Dorsolateral prefrontal cortex (tissue), 120 donors: ENCODE measurements at regions of chr14 and their contacts with region 1.

Region 1: GRCh38 chr14:70188659-70189455 is at the start of gene SLC8A3:
- DNase-seq: peak; percentile 44 to 89 (median 78)
- H3K4me3 ChIP-seq: peak within 1 kb of the TSS; percentile 46 to 81 (median 68)
- H3K27ac ChIP-seq: peak within 1 kb of the TSS in 51 of 59 donors; percentile 11 to 89 (median 70)
- H3K27me3 ChIP-seq: peaks cover 0 to 19% (median 0%) of the 10 kb centered on the region in 45 donors
- CTCF ChIP-seq: peak in 8 of 56 donors; percentile 4 to 20 (median 12)
- total RNA-seq, gene SLC8A3: 8.1 to 33.3 (median 20.7) TPM

Region 2: GRCh38 chr14:68297876-68298469 is 1890.9 kb before region 1 on chr14:
- intact Hi-C with region 1: no loop called
- DNase-seq: no peak
- H3K4me3 ChIP-seq: no peak overlapping the region
- H3K27ac ChIP-seq: peak overlapping the region in 1 of 59 donors; percentile 2
- H3K27me3 ChIP-seq: no peaks in the 10 kb centered on the region
- CTCF ChIP-seq: peak in 7 of 56 donors; percentile 12 to 21 (median 16)

Region 3: GRCh38 chr14:70096866-70097265 is 92.0 kb before region 1 on chr14:
- intact Hi-C with region 1: loop called (anchors 5 kb)
- DNase-seq: peak in 4 of 10 donors; percentile 16 to 59 (median 52)
- H3K4me3 ChIP-seq: no peak overlapping the region
- H3K27ac ChIP-seq: no peak overlapping the region
- H3K27me3 ChIP-seq: peaks cover 0 to 5% (median 0%) of the 10 kb centered on the region in 45 donors
- CTCF ChIP-seq: peak in 50 of 56 donors; percentile 16 to 60 (median 36)

Region 4: GRCh38 chr14:70281939-70282338 is 93.1 kb after region 1 on chr14:
- intact Hi-C with region 1: no loop called
- DNase-seq: no peak
- H3K4me3 ChIP-seq: peak overlapping the region in 2 of 59 donors; percentile 9 to 19
- H3K27ac ChIP-seq: no peak overlapping the region
- H3K27me3 ChIP-seq: peaks cover 0 to 19% (median 0%) of the 10 kb centered on the region in 45 donors
- CTCF ChIP-seq: no peak

Region 5: GRCh38 chr14:70303545-70304293 is 114.9 kb after region 1 on chr14:
- intact Hi-C with region 1: no loop called
- DNase-seq: no peak
- H3K4me3 ChIP-seq: no peak overlapping the region
- H3K27ac ChIP-seq: no peak overlapping the region
- H3K27me3 ChIP-seq: no peaks in the 10 kb centered on the region
- CTCF ChIP-seq: no peak